AG04450 (cell line): ENCODE measurements at regions of chr11 and their contacts with region 1.

Region 1: GRCh38 chr11:65095974-65096806 is at the start of gene VPS51:
- DNase-seq: peak; percentile 74
- H3K4me3 ChIP-seq: peak within 1 kb of the TSS; percentile 77
- H3K27ac ChIP-seq: peak within 1 kb of the TSS; percentile 75
- H3K27me3 ChIP-seq: no peaks in the 10 kb centered on the region
- CTCF ChIP-seq: no peak
- polyA plus RNA-seq, gene VPS51: 38.9 and 74.1 TPM in 2 replicates

Region 2: GRCh38 chr11:65051389-65051858 is 44.8 kb before region 1 on chr11:
- CTCF ChIA-PET with region 1: interaction called, 13 read pairs
- POLR2A ChIA-PET with region 1: no interaction called
- DNase-seq: no peak
- H3K4me3 ChIP-seq: no peak overlapping the region
- H3K27ac ChIP-seq: no peak overlapping the region
- H3K27me3 ChIP-seq: peaks cover 8% of the 10 kb centered on the region
- CTCF ChIP-seq: no peak

Region 3: GRCh38 chr11:65182258-65183170 is 86.3 kb after region 1 on chr11:
- CTCF ChIA-PET with region 1: no interaction called
- POLR2A ChIA-PET with region 1: no interaction called
- DNase-seq: no peak
- H3K4me3 ChIP-seq: peak overlapping the region; percentile 88
- H3K27ac ChIP-seq: no peak overlapping the region
- H3K27me3 ChIP-seq: no peaks in the 10 kb centered on the region
- CTCF ChIP-seq: no peak